ENCODE measurements at regions of chr2 and their contacts with region 1.

Region 1: DNA sequence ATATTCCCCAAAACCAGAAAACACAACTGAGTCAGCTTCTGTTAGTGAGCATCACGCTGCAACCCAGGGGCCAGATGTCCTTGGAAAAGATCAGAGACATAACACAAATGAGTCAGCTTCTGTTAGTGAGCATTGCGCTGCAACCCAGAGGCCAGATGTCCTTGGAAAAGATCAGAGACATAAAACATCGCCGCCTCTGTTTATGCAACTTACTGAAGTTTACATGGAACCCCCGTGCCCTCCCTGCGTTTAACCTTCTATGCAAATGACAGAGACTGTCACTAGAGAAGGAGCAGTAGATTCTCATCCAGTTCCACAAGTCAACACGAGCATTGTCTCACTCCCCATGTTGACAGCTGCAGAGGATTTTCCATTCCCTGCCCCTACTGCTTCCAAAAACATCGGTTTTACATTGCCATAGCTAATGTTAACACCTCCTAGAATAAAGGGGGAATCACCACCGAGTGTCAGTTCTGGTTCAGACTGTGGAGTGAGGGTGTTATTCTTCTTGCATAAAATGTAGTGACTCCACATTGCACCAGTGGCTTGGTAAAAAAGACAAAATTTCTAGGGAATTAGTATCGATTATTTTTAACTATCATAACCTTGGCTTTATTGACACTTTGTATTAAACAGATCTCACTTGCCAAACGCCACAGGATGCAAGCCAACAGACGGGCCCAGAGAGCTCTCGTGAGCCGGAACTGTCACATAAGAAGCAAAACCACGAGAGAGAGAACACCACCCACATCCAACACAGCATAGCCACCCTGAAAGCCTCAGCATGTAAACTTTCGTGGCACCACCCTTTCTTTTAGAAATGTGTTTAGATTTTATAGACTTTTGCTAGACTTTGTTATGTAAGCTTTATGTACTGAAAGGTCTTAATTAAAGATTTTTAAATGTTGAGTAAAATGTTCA is 87.7 kb downstream of the SH3YL1 start:
- DNase-seq: peak; percentile 100
- ATAC-seq: peak; percentile 90
- H3K4me3 ChIP-seq: peak overlapping the region; percentile 28 to 60 (median 41); a peak in 5 of 6 replicates
- H3K27ac ChIP-seq: peak overlapping the region; percentile 79
- H3K4me1 ChIP-seq: peaks cover 55% of the 10 kb centered on the region
- H3K27me3 ChIP-seq: 0 out of 5 replicates have a peak, but pooled peaks cover 0 to under 1% of the 10 kb centered on the region in 2 experiments
- CTCF ChIP-seq: no peak; the same call in 1 of the 2 replicates
- EP300 ChIP-seq: peak; percentile 65 to 98; a peak in 3 of 4 replicates
- POLR2A ChIP-seq: peak; percentile 39 to 70; a peak in 3 of 4 replicates
- RAD21 ChIP-seq: no peak

Region 2: DNA sequence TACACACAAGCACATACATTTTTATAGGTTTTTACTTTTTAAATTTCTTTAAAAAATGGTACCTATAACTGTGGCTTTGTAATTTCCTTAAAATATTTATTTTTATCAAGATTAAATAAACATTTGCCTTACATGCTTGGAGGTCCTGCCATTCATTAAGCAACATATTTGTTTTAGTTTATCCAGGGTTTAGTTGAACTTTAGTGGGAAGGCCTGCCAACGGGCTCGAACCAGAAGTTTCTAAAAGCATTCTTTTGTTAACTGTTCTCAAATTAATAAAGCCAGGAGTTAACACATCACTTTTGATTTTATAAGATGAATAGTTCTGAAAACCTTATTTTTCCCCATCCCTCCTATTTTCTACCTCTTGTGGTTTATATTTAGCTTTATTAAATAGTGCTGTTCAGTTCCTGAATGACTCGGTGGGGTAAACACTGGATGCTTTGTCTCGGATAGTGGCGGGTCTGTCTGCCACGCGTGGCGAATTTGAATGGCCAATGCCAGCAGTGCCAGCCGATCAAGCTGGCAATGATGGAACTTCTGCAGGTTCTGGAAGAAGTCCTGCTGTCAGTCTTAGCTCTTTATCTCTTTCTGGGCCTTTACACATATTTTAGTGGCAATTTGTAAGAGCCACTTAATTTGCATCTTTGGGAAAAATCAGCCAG is 55.5 kb after region 1 on chr2:
- CTCF ChIA-PET with region 1: no interaction called
- POLR2A ChIA-PET with region 1: no interaction called
- in situ Hi-C with region 1: no loop called
- intact Hi-C with region 1: loop called (anchors 5 kb)
- DNase-seq: peak; percentile 15
- ATAC-seq: no peak
- H3K4me3 ChIP-seq: no peak overlapping the region
- H3K27ac ChIP-seq: no peak overlapping the region
- H3K4me1 ChIP-seq: peaks cover 32% of the 10 kb centered on the region
- H3K27me3 ChIP-seq: no peaks in the 10 kb centered on the region
- CTCF ChIP-seq: no peak
- EP300 ChIP-seq: no peak
- POLR2A ChIP-seq: no peak
- RAD21 ChIP-seq: no peak

Region 3: GRCh38 chr2:246489-247144 is 70.5 kb after region 1 on chr2:
- CTCF ChIA-PET with region 1: interaction called, 8 read pairs
- POLR2A ChIA-PET with region 1: interaction called, 14 read pairs
- in situ Hi-C with region 1: no loop called
- intact Hi-C with region 1: loop called (anchors 1 kb)
- DNase-seq: peak; percentile 81
- ATAC-seq: peak; percentile 57
- H3K4me3 ChIP-seq: no peak overlapping the region
- H3K27ac ChIP-seq: no peak overlapping the region
- H3K4me1 ChIP-seq: peaks cover 54% of the 10 kb centered on the region
- H3K27me3 ChIP-seq: no peaks in the 10 kb centered on the region
- CTCF ChIP-seq: peak; percentile 70
- EP300 ChIP-seq: no peak
- POLR2A ChIP-seq: no peak
- RAD21 ChIP-seq: peak; percentile 39; the same call in 1 of the 2 replicates

Region 4: GRCh38 chr2:252001-252602 is 76.0 kb after region 1 on chr2:
- CTCF ChIA-PET with region 1: interaction called, 8 read pairs
- POLR2A ChIA-PET with region 1: interaction called, 156 read pairs
- in situ Hi-C with region 1: no loop called
- intact Hi-C with region 1: no loop called
- DNase-seq: no peak
- ATAC-seq: no peak
- H3K4me3 ChIP-seq: no peak overlapping the region
- H3K27ac ChIP-seq: no peak overlapping the region
- H3K4me1 ChIP-seq: peaks cover 57% of the 10 kb centered on the region
- H3K27me3 ChIP-seq: no peaks in the 10 kb centered on the region
- CTCF ChIP-seq: no peak
- EP300 ChIP-seq: no peak
- POLR2A ChIP-seq: no peak
- RAD21 ChIP-seq: no peak

Region 5: DNA sequence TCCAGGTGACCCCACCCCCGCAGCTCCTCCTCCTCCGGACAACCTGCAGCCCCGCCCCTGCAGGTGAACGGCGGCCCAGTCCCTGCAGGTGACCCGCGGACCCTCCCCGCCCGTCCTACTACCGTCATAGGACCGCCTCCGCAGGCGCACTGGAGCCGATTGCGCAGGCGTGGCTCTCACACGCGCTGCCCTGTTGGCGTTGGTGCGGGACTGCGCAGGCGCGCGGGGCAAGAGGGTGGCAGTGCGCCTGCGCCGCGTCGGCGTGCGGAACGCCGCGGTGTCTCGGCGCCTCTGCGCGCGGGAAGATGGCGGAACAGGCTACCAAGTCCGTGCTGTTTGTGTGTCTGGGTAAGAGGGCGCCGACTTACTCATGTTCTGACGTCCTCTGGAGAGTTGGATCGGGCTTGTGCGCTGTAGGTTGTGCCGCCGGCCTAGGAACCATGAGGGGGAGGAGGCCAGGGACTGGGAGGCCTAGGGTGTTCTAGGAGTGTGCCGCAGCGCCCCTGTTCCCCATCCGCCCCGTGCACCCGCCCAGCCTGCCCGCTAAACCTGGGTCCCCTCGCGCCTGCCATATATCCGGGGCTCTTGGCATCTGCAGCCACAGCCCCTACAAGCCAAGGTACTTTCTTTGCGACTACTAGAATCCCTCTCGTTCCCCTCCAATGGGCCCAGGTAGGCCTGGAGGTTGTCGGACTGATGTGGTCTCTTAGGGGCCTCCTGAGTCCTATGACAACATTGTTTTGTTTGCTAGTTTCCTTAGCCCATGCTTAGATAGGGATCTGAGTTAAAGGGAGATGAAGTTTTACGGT is 88.7 kb after region 1 on chr2 and contains the start of gene ACP1:
- CTCF ChIA-PET with region 1: interaction called, 4 read pairs
- POLR2A ChIA-PET with region 1: interaction called, 156 read pairs
- in situ Hi-C with region 1: loop called (anchors 5 kb)
- intact Hi-C with region 1: loop called (anchors 1 kb)
- DNase-seq: peak; percentile 93
- ATAC-seq: peak; percentile 76
- H3K4me3 ChIP-seq: peak within 1 kb of the TSS; percentile 95 to 99 (median 96)
- H3K27ac ChIP-seq: peak within 1 kb of the TSS; percentile 84
- H3K4me1 ChIP-seq: peaks cover 83% of the 10 kb centered on the region
- H3K27me3 ChIP-seq: peaks cover 0 to 5% of the 10 kb centered on the region in 2 experiments; a peak in 1 of 5 replicates
- CTCF ChIP-seq: 0 out of 2 replicates have a peak, but pooled peaks have one; percentile 44
- EP300 ChIP-seq: 0 out of 4 replicates have a peak, but pooled peaks of 1 of the 2 experiments have one; percentile 13
- POLR2A ChIP-seq: peak; percentile 97 to 98
- RAD21 ChIP-seq: peak; percentile 65
- total RNA-seq, gene ACP1: 246 and 290 TPM in 2 replicates

Region 6: GRCh38 chr2:290090-290722 is 114.1 kb after region 1 on chr2:
- CTCF ChIA-PET with region 1: interaction called, 96 read pairs
- POLR2A ChIA-PET with region 1: interaction called, 18 read pairs
- in situ Hi-C with region 1: no loop called
- intact Hi-C with region 1: loop called (anchors 1 kb)
- DNase-seq: peak; percentile 76
- ATAC-seq: peak; percentile 83
- H3K4me3 ChIP-seq: peak overlapping the region; percentile 55 to 82 (median 65)
- H3K27ac ChIP-seq: no peak overlapping the region
- H3K4me1 ChIP-seq: peaks cover 16% of the 10 kb centered on the region
- H3K27me3 ChIP-seq: peaks cover 3 to 19% of the 10 kb centered on the region in 2 experiments
- CTCF ChIP-seq: peak; percentile 96
- EP300 ChIP-seq: no peak
- POLR2A ChIP-seq: no peak
- RAD21 ChIP-seq: peak; percentile 96

Measured in HepG2 (cell line).